ENCODE measurements at regions of chr22 and their contacts with region 1.

Region 1: DNA sequence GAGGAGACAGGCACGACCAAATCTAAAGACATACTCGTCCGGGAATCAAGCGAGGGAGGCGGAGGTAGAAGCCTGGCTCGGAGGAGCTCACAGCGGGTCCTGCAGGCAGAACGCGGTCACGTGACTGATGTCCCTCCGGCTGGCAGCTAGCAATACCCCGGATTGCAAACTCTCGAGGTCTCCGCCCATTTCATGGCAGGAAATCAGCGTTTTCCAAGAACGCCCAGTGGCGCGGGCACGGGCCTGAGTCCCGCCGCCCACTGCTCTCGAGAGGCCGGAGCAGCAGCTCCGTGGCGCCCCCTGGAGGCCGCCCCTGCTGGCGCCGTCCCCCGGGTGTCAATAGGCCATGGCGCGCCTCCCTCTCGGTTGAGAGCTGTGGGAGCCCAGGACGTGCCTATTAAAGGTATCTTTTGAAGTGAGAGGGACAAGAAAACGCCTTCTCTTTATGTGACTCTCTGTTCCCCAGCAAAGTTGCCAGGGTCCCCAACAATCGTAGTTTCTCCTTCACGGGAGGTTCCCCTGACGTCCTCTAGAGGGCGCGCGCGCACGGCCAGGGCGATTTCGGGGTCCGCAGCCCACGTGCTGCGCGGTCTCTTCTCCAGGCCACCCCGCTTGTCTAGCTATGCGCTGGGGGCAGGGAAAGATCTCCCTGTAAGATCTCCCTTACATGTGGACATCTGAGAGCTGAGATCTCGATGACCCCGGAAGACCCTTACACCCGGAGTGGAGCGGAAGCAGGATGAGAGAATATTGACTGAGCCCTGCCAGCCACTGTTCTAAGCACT is 37.3 kb upstream of the RBFOX2 start:
- DNase-seq: peak; percentile 94
- ATAC-seq: peak; percentile 92
- H3K4me3 Mint-ChIP-seq: peak overlapping the region; percentile 84
- H3K27ac Mint-ChIP-seq: peak overlapping the region; percentile 87
- H3K4me1 Mint-ChIP-seq: peaks cover 7% of the 10 kb centered on the region; the same call in 1 of the 2 replicates
- H3K27me3 Mint-ChIP-seq: no peaks in the 10 kb centered on the region; the same call in 1 of the 2 replicates
- CTCF ChIP-seq: peak; percentile 100

Region 2: DNA sequence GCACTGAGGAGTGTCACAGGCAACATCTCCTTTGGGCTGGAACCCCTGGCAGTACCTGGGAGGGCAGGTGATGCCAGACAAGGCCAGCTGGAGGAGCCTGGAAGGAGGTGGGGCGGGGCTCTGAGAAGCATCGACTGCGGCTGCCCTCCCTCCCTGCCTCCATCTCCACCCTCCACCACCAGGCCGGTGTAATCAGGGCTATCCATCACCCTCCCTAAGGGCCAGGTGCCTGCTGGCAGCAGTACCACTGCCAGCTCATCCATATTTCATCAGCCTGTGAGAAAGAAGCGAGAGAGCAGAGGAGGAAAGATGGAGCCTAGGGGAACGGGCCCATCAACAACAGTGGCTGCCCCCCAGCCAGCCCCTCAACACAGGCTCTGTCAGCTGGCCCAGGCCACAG is 576.7 kb before region 1 on chr22:
- CTCF ChIA-PET with region 1: no interaction called
- POLR2A ChIA-PET with region 1: interaction called, 16 read pairs
- DNase-seq: no peak
- ATAC-seq: no peak; the same call in 1 of the 2 replicates
- H3K4me3 Mint-ChIP-seq: no peak overlapping the region
- H3K27ac Mint-ChIP-seq: no peak overlapping the region
- H3K4me1 Mint-ChIP-seq: no peaks in the 10 kb centered on the region
- H3K27me3 Mint-ChIP-seq: peaks cover 59% of the 10 kb centered on the region
- CTCF ChIP-seq: no peak

Region 3: GRCh38 chr22:35914665-35915476 is 151.1 kb before region 1 on chr22:
- CTCF ChIA-PET with region 1: interaction called, 14 read pairs
- POLR2A ChIA-PET with region 1: no interaction called
- DNase-seq: peak; percentile 49
- ATAC-seq: peak; percentile 96
- H3K4me3 Mint-ChIP-seq: peak overlapping the region; percentile 71
- H3K27ac Mint-ChIP-seq: peak overlapping the region; percentile 99
- H3K4me1 Mint-ChIP-seq: peaks cover 68% of the 10 kb centered on the region
- H3K27me3 Mint-ChIP-seq: no peaks in the 10 kb centered on the region
- CTCF ChIP-seq: no peak

Region 4: DNA sequence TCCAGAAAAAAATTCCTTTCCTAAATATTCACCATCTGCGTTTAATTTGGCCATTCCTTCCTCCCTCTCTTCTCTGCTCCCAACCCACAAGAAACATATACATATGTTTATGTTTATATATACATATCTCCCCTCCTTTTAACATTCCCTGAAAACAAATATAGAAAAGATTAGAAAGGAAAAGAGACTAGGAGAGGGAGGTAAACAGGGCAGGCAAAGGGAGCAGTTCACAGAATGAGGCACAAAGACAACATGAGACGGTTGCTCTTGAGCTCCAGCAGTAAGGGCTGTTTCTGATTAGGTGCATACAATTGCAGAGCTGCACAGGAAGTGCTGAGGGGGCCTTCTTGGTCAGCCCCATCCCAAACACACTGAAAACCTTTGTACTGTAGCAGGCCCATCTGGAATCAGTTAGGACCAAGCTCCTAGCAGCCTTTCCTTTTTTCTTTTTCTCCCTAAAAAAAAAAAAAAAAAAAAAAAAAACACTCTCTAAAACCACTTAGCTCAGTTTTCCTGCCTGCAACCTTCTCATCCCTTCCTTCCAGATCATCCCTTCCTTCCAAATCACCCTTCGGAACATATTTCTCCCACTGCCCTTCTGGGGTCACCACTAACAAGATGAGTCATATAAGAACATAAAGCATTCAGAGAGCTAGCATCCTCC is 94.4 kb before region 1 on chr22:
- CTCF ChIA-PET with region 1: interaction called, 14 read pairs
- POLR2A ChIA-PET with region 1: no interaction called
- DNase-seq: no peak
- ATAC-seq: peak; percentile 41
- H3K4me3 Mint-ChIP-seq: no peak overlapping the region
- H3K27ac Mint-ChIP-seq: peak overlapping the region; percentile 77
- H3K4me1 Mint-ChIP-seq: peaks cover 62% of the 10 kb centered on the region
- H3K27me3 Mint-ChIP-seq: no peaks in the 10 kb centered on the region
- CTCF ChIP-seq: no peak

Region 5: DNA sequence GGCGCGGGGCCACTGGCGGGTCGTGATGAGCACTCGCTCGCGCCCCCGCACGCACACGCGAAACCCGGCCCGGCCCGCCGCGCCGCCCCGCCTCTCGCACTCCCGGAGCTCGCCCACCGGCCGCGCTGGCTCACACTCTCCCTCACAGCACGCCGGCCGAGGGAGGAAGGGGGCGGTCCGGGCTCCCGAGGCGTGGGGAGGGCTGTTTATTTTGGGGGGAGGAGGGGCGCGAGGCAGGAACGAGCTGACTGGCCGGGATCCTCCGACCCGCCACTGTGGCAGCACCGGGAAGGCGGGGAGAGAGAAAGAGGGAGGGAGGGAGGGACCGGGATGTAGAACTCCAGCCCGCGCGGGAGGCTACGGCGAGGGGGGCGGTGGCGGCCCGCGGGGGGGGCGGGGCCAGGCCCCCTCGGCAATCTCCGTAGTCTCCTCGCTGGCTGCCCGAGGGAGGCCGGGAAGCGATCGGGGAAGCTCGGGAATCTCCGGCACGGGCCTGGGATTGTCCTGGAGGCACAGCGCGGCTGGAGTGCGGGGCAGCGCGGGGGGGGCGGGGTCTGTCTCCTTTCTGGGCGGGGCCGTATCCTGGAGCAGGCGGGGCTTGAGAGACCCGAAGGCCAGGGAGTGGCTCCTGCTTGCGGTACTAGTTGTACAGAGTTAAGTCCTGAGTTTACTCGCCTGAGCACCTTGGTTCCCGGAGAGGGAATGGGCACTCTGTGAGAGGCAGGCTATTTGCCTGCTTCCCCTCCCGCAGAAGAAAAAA is 37.1 kb before region 1 on chr22 and contains the start of gene RBFOX2:
- CTCF ChIA-PET with region 1: interaction called, 60 read pairs
- POLR2A ChIA-PET with region 1: interaction called, 9 read pairs
- DNase-seq: peak; percentile 99
- ATAC-seq: peak; percentile 97
- H3K4me3 Mint-ChIP-seq: peak within 1 kb of the TSS; percentile 90
- H3K27ac Mint-ChIP-seq: peak within 1 kb of the TSS; percentile 88
- H3K4me1 Mint-ChIP-seq: peaks cover 30% of the 10 kb centered on the region
- H3K27me3 Mint-ChIP-seq: no peaks in the 10 kb centered on the region; the same call in 1 of the 2 replicates
- CTCF ChIP-seq: no peak
- total RNA-seq, gene RBFOX2: 102 to 107 TPM (median 103 TPM) in 3 replicates

Region 6: GRCh38 chr22:36097880-36098279 is 31.9 kb after region 1 on chr22:
- CTCF ChIA-PET with region 1: interaction called, 23 read pairs
- POLR2A ChIA-PET with region 1: interaction called, 7 read pairs
- DNase-seq: no peak
- ATAC-seq: no peak
- H3K4me3 Mint-ChIP-seq: no peak overlapping the region
- H3K27ac Mint-ChIP-seq: no peak overlapping the region
- H3K4me1 Mint-ChIP-seq: no peaks in the 10 kb centered on the region
- H3K27me3 Mint-ChIP-seq: no peaks in the 10 kb centered on the region
- CTCF ChIP-seq: no peak

Measured in WTC11 (cell line).